ENCODE measurements at regions of chr4 and their contacts with region 1.

Region 1: DNA sequence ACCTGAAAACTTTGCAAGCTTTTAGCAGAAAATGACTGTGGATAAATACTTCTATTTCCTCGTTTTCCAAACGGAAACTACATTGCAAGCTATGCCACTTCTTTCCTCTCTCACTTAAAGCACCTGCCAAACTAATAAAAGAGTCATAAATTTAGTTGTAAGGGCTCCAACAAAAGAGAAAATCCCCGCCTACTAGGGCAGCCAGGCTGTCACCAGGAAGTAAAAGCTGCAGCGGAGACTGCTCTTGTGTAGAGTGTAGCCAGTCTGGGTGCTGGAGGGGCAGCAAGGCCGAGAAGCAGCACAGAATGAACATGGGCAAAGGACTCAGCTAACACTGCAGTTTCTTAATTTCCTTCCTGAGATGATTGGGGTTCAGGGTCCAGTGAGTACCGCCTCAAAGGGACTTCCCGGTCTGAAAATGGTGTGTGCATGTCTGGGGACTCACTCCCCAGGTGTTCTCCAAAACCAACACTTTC is 89.3 kb upstream of the MAML3 start:
- DNase-seq: no peak
- ATAC-seq: no peak
- H3K4me3 ChIP-seq: no peak overlapping the region
- H3K27ac ChIP-seq: no peak overlapping the region
- H3K4me1 ChIP-seq: no peaks in the 10 kb centered on the region
- H3K27me3 ChIP-seq: no peaks in the 10 kb centered on the region
- CTCF ChIP-seq: no peak

Region 2: DNA sequence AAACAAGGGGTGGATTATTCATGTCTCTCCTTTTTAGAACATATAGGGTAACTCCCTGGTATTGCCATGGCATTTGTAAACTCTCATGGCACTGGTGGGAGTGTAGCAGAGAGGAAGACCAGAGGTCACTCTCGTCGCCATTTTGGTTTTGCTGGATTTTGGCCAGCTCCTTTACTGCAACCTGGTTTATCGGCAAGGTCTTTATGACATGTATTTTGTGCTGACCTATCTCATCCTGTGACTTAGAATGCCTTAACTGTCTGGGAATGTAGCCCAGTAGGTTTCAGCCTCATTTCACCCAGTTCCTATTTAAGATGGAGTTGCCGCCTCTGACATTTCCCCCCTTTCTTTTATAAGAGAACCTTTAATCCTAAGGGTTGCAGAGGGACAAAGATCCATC is 531.9 kb before region 1 on chr4:
- CTCF ChIA-PET with region 1: interaction called, 12 read pairs
- POLR2A ChIA-PET with region 1: no interaction called
- in situ Hi-C with region 1: no loop called
- intact Hi-C with region 1: no loop called
- DNase-seq: no peak
- ATAC-seq: no peak
- H3K4me3 ChIP-seq: no peak overlapping the region
- H3K27ac ChIP-seq: no peak overlapping the region
- H3K4me1 ChIP-seq: no peaks in the 10 kb centered on the region
- H3K27me3 ChIP-seq: no peaks in the 10 kb centered on the region
- CTCF ChIP-seq: no peak